Aorta (tissue), 5 donors: ENCODE measurements at regions of chr20 and their contacts with region 1.

Region 1: GRCh38 chr20:9407805-9408421 is 106.5 kb upstream of the LAMP5 start:
- DNase-seq: peak in 1 of 2 donors; percentile 47
- ATAC-seq: peak; percentile 77
- H3K4me3 ChIP-seq: no peak overlapping the region
- H3K27ac ChIP-seq: no peak overlapping the region
- H3K4me1 ChIP-seq: no peaks in the 10 kb centered on the region
- H3K27me3 ChIP-seq: no peaks in the 10 kb centered on the region

Region 2: GRCh38 chr20:9609887-9610502 is 202.1 kb after region 1 on chr20:
- intact Hi-C with region 1: loop called (anchors 1 to 2 kb)
- DNase-seq: no peak
- ATAC-seq: no peak
- H3K4me3 ChIP-seq: no peak overlapping the region
- H3K27ac ChIP-seq: no peak overlapping the region
- H3K4me1 ChIP-seq: no peaks in the 10 kb centered on the region
- H3K27me3 ChIP-seq: no peaks in the 10 kb centered on the region

Region 3: DNA sequence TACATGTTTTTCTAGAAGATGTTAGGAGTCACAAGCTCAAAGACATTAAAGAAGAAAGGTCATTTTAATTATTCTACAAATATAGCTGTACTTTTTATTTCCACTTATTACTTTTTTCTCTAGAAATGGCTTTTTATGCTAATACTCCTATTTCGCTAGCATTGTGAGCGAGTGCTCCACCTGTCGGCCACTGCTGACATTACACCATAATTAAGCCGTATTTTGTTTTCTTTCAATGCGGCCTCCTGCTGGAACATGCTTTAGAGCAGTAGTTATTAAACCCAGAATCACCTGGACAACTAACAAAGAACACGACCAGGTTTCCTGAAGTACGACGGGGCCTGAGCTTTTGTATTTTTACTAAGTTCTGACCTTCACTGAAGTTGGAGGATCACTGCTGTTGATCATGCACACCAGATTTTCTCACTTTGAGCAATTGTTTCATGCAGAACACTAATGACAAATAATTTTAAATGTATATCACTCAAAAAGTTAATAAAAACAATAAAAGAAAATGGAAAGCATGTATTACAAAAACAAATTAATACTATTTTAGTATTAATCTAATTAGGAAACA is 505.0 kb after region 1 on chr20:
- intact Hi-C with region 1: loop called in 1 of 2 experiments (anchors 5 kb)
- DNase-seq: peak in 1 of 2 donors; percentile 78
- ATAC-seq: no peak
- H3K4me3 ChIP-seq: no peak overlapping the region
- H3K27ac ChIP-seq: no peak overlapping the region
- H3K4me1 ChIP-seq: peaks cover 0 to 2% of the 10 kb centered on the region in 2 donors
- H3K27me3 ChIP-seq: no peaks in the 10 kb centered on the region